ENCODE measurements at regions of chr1 and their contacts with region 1.

Region 1: GRCh38 chr1:157490467-157491165 is 61.7 kb downstream of the FCRL5 start:
- DNase-seq: peak in 4 of 5 donors; percentile 27 to 41 (median 34)
- ATAC-seq: peak in 3 of 4 donors; percentile 26 to 61 (median 31)
- H3K4me3 ChIP-seq: no peak overlapping the region
- H3K27ac ChIP-seq: no peak overlapping the region
- H3K4me1 ChIP-seq: no peaks in the 10 kb centered on the region
- H3K27me3 ChIP-seq: peaks cover 0 to 26% (median 3%) of the 10 kb centered on the region in 9 donors
- CTCF ChIP-seq: peak; percentile 21 to 60 (median 48)
- POLR2A ChIP-seq: no peak

Region 2: GRCh38 chr1:157090196-157090647 is 400.4 kb before region 1 on chr1:
- intact Hi-C with region 1: loop called in 4 of 10 experiments (anchors 5 to 10 kb)
- DNase-seq: peak; percentile 84 to 93 (median 87)
- ATAC-seq: peak; percentile 74 to 90 (median 86)
- H3K4me3 ChIP-seq: no peak overlapping the region
- H3K27ac ChIP-seq: peak overlapping the region in 2 of 12 donors; percentile 14 to 24
- H3K4me1 ChIP-seq: peaks cover 0 to 21% (median 5%) of the 10 kb centered on the region in 12 donors
- H3K27me3 ChIP-seq: no peaks in the 10 kb centered on the region
- CTCF ChIP-seq: peak; percentile 90 to 98 (median 96)
- POLR2A ChIP-seq: no peak

Region 3: DNA sequence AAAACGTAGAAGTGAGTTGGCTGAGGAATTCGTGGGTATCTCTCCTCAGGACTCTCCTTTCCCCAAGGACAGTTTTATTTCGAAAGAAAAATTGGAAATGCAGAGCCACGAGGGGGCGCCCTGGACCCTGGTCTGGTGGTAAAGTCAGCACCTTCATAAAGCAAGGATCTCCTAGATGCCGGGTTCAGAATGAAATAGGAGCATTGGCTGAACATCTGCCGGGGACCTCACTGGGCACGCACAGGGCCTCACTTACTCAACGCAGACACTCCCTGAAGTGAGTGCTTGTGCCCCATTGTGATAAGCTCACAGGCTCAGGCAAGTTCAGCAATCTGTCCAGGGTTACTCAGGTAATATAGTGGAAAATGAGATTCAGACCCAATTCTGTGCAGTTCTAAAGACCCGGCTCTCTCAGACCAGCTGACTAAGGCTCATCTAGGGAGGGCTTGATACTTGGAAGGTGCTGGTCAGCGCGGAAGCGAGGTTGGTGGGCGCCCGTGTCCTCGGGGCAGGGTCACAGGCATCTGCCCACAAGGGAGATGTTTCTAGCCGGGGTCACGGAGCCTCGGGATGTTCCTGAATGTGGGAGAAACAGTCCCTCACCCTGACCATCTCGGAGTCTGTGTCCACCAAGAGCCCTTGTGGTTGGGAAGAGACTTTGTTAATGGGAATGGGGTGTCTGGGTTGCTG is 296.8 kb before region 1 on chr1:
- intact Hi-C with region 1: loop called in 9 of 10 experiments (anchors 2 to 10 kb)
- DNase-seq: peak in 2 of 5 donors; percentile 32 to 43
- ATAC-seq: no peak
- H3K4me3 ChIP-seq: no peak overlapping the region
- H3K27ac ChIP-seq: no peak overlapping the region
- H3K4me1 ChIP-seq: peaks cover 0 to 15% (median 0%) of the 10 kb centered on the region in 12 donors
- H3K27me3 ChIP-seq: peaks cover 15 to 68% (median 26%) of the 10 kb centered on the region in 9 donors
- CTCF ChIP-seq: peak; percentile 32 to 72 (median 52)
- POLR2A ChIP-seq: no peak

Region 4: GRCh38 chr1:157307491-157307890 is 183.1 kb before region 1 on chr1:
- intact Hi-C with region 1: loop called in 1 of 10 experiments (anchors 5 kb)
- DNase-seq: no peak
- ATAC-seq: no peak
- H3K4me3 ChIP-seq: no peak overlapping the region
- H3K27ac ChIP-seq: no peak overlapping the region
- H3K4me1 ChIP-seq: no peaks in the 10 kb centered on the region
- H3K27me3 ChIP-seq: peaks cover 0 to 14% (median 3%) of the 10 kb centered on the region in 9 donors
- CTCF ChIP-seq: no peak
- POLR2A ChIP-seq: no peak

Region 5: DNA sequence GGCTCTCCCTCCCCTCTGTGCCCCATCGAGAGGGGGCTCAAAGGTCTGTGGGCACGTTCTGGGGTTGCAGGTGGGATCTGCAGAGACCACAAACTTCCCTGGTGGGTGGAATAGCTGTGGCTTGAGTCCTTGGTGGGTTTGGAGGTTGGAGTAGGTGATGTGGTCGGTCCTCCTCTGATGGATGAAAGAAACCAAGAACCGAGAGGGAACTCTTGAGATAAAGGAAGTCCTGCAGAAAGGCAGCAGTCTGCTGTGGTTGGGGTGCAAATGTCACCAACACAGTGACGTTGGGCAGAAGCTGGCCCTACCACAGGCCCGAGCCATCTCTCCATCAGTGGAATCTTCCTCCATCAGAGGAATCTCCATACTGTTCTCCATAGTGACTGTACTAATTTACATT is 110.1 kb before region 1 on chr1:
- intact Hi-C with region 1: loop called in 3 of 10 experiments (anchors 5 kb)
- DNase-seq: no peak
- ATAC-seq: no peak
- H3K4me3 ChIP-seq: no peak overlapping the region
- H3K27ac ChIP-seq: no peak overlapping the region
- H3K4me1 ChIP-seq: no peaks in the 10 kb centered on the region
- H3K27me3 ChIP-seq: peaks cover 0 to 49% (median 9%) of the 10 kb centered on the region in 9 donors
- CTCF ChIP-seq: no peak
- POLR2A ChIP-seq: no peak

Measured in heart left ventricle (tissue), 16 donors.